Thyroid gland (tissue), 4 donors: ENCODE measurements at regions of chr3 and their contacts with region 1.

Region 1: GRCh38 chr3:124903907-124904834 is 17.0 kb upstream of the ITGB5 start:
- DNase-seq: no peak
- H3K4me3 ChIP-seq: no peak overlapping the region
- H3K27ac ChIP-seq: no peak overlapping the region
- H3K4me1 ChIP-seq: no peaks in the 10 kb centered on the region
- H3K27me3 ChIP-seq: no peaks in the 10 kb centered on the region
- CTCF ChIP-seq: no peak
- POLR2A ChIP-seq: no peak

Region 2: DNA sequence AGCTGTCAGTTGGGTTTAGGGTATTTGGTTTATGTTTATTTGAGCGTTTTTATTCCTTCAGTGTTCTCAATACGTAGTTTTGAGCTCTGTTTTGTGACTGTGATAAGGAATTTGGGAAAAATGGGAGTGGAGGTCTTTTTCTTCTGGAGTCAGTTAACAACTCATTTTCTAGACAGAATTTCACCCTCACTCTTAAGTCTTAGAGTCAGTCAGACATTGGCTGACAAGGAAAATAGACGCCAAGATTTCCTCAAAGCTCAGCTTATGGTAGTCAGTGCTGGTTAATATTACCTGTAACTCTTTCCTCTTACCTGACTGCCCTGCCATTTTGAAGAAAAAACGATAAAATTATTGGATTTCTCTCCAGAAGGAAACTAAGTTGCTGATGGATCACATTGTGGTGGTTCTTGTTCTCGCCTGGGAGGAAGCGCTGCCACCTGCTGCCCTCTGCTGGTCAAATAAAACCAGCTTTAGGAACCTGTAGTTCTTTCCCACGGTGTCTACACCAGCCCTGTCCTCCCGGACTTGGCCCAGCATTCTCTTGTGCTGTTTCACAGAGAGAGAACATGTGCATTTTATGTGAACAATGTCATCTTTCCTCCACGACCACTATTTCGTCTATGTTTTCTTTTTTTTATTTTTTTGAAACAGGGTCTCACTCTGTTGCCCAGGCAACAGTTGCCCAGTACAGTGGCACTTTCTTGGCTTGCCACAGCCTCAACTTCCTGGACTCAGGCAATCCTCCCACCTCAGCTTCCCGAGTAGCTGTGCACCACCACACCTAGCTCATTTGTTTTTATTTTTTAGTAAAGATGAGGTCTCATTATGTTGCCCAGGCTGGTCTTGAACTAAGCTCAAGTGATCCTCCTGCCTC is 215.4 kb before region 1 on chr3:
- intact Hi-C with region 1: no loop called
- DNase-seq: peak; percentile 79 to 84
- H3K4me3 ChIP-seq: no peak overlapping the region
- H3K27ac ChIP-seq: no peak overlapping the region
- H3K4me1 ChIP-seq: no peaks in the 10 kb centered on the region
- H3K27me3 ChIP-seq: no peaks in the 10 kb centered on the region
- CTCF ChIP-seq: peak; percentile 55 to 86 (median 80)
- POLR2A ChIP-seq: no peak

Region 3: DNA sequence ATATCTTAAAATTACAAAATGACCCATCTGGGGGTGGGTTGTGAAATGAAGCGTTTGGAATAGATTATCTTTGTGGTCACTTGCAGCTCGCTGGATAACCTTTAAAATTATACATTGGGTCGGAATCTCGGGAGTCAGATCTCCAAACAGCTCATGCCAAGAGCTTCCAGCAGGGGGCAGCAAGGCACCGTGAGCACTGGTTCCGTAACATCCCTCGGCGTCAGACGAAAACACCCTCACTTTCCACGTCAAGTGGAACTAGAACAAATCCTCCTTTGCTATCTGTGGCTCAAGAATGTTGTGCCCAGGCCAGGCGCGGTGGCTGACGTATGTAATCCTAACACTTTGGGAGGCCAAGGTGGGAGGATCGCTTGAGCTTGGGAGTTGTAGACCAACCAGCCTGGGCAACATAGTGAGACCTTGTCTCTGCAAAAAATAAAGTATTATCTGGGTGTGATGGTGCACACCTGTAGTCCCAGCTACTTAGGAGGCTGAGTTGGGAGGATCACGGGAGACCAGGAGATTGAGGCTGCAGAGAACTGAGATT is 142.8 kb before region 1 on chr3:
- intact Hi-C with region 1: loop called (anchors 2 kb)
- DNase-seq: peak; percentile 89 to 90
- H3K4me3 ChIP-seq: no peak overlapping the region
- H3K27ac ChIP-seq: peak overlapping the region in 2 of 3 donors; percentile 17 to 30
- H3K4me1 ChIP-seq: peaks cover 3 to 5% of the 10 kb centered on the region in 2 donors
- H3K27me3 ChIP-seq: no peaks in the 10 kb centered on the region
- CTCF ChIP-seq: peak; percentile 81 to 98 (median 94)
- POLR2A ChIP-seq: no peak

Region 4: GRCh38 chr3:124859025-124859424 is 45.1 kb before region 1 on chr3:
- intact Hi-C with region 1: no loop called
- DNase-seq: no peak
- H3K4me3 ChIP-seq: no peak overlapping the region
- H3K27ac ChIP-seq: peak overlapping the region in 2 of 3 donors; percentile 67
- H3K4me1 ChIP-seq: peaks cover 7 to 27% of the 10 kb centered on the region in 2 donors
- H3K27me3 ChIP-seq: no peaks in the 10 kb centered on the region
- CTCF ChIP-seq: no peak
- POLR2A ChIP-seq: no peak

Region 5: DNA sequence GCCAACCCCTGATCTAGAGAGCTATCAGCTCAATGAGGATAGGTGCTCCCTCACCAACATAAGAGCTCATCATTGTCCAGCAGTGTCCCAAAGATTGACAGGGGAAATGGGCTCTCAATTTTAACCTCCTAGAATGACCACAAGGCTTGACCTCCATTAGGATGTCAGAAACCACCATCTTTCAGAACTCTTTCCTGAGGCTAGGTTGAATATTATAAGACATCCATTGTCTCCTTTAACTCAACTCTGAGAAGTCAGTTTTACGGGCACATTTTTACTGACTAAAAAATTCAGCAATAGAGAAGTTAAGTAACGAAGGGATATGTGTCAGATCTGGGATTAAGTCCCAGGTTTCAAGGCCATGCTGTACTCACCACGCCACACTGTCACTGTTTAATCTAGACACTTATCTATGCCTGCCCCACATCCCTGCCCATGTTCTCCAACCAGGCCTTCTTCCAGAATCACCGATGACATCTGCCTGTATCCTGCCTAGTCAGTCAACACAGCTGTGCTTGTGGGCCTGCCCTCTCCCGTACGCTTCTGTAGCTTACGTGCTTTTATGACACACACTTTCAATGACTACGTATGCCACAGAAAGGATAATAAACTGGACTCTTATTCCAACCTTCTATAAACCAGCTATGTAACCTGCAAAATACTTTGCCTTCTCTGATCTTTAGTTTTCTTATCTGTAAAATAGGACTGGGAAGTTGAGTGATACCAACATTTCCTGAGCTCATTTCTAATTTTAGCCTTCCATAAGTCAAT is 47.5 kb after region 1 on chr3:
- intact Hi-C with region 1: no loop called
- DNase-seq: no peak
- H3K4me3 ChIP-seq: no peak overlapping the region
- H3K27ac ChIP-seq: no peak overlapping the region
- H3K4me1 ChIP-seq: no peaks in the 10 kb centered on the region
- H3K27me3 ChIP-seq: no peaks in the 10 kb centered on the region
- CTCF ChIP-seq: no peak
- POLR2A ChIP-seq: no peak